HepG2 (cell line): ENCODE measurements at regions of chr2 and their contacts with region 1.

Region 1: DNA sequence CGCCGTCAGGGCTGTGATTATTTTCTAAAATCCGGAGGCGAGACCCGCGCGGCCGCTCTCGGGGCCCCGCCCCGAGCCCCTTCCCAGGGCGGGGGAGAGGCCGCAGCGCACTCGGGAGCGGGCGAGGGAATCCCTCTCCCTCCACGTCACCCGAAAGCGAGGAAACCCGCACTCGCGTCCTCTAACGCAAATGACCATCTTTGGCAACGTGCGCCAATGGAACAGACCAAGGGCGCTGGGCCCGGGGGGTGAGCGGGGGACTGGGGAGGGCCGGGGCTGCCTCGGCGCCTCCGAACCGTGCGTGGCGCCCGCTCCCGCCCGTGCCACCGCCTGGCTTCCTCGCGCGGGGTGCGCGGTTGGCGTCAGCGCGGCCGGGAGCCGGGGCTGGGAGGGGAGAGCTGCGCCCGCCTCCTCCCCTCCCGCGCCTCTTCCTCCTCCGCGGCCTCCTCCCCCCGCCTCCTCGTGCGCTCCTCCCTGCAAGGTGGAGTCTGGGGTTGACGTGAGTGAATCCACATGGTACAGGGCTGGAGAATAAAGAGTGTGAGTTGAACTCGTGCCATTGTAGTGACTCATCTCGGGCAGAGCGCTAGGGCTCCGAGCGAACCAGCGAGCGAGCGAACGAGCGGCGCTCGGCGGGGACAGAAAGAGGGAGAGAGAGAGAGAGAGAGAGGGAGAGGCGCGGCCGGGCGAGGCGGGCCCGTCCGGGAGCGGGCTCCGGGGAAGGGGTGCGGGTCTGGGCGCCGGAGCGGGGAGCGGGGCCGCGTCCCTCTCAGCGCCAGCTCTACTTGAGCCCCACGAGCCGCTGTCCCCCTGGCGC is at the start of gene FOSL2:
- DNase-seq: peak; percentile 100
- ATAC-seq: peak; percentile 85
- H3K4me3 ChIP-seq: peak within 1 kb of the TSS; percentile 91 to 95 (median 93)
- H3K27ac ChIP-seq: peak within 1 kb of the TSS; percentile 88
- H3K4me1 ChIP-seq: peaks cover 45% of the 10 kb centered on the region
- H3K27me3 ChIP-seq: peaks cover 1 to 20% of the 10 kb centered on the region in 2 experiments; a peak in 3 of 5 replicates
- CTCF ChIP-seq: peak; percentile 36
- EP300 ChIP-seq: peak; percentile 46 to 55; a peak in 2 of 4 replicates
- POLR2A ChIP-seq: peak in 1 of 2 experiments; percentile 88; a peak in 2 of 4 replicates
- RAD21 ChIP-seq: peak; percentile 53
- total RNA-seq, gene FOSL2: 2.3 and 3.4 TPM in 2 replicates

Region 2: DNA sequence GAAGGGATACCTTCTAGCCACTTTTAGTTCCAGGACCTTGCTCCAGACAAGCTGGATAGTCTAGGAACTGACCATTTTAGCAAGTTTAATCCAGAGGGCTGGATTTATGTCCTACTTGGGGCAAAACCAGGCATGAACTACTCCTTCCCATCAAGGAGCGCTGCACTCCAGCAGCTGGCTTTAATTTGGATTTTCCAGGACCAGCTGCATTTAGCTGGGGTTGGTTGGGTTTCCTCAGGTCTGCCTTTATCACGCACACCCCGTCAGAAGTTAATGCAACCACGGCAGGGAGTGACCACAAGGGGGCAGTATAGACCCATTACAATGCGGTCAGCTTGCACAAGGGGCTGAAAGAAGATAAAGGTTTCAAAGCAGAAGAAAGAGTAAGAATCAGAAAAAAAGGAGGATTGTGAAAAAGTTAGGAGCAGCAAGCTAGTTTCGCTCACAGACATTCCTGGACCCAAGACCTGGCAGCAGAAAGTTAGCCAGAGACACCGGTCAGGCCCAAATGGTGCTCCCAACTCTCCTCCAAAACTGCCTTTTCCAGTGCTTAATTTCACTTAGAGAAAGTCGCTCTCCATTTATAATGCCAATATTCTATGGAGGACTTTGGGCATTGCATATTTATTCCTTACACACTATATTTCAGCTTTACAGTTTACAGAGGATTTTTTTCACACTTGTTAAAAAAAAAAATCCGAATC is 688.7 kb before region 1 on chr2:
- CTCF ChIA-PET with region 1: interaction called, 11 read pairs
- POLR2A ChIA-PET with region 1: interaction called, 3 read pairs
- in situ Hi-C with region 1: loop called (anchors 10 kb)
- intact Hi-C with region 1: loop called (anchors 2 kb)
- DNase-seq: peak; percentile 80
- ATAC-seq: peak; percentile 85
- H3K4me3 ChIP-seq: no peak overlapping the region
- H3K27ac ChIP-seq: no peak overlapping the region
- H3K4me1 ChIP-seq: peaks cover 55% of the 10 kb centered on the region
- H3K27me3 ChIP-seq: no peaks in the 10 kb centered on the region
- CTCF ChIP-seq: peak; percentile 96
- EP300 ChIP-seq: no peak
- POLR2A ChIP-seq: no peak
- RAD21 ChIP-seq: peak; percentile 87

Region 3: GRCh38 chr2:27807476-27807875 is 585.0 kb before region 1 on chr2:
- CTCF ChIA-PET with region 1: interaction called, 5 read pairs
- POLR2A ChIA-PET with region 1: no interaction called
- in situ Hi-C with region 1: no loop called
- intact Hi-C with region 1: loop called (anchors 1 kb)
- DNase-seq: peak; percentile 36
- ATAC-seq: peak; percentile 95
- H3K4me3 ChIP-seq: no peak overlapping the region
- H3K27ac ChIP-seq: no peak overlapping the region
- H3K4me1 ChIP-seq: peaks cover 15% of the 10 kb centered on the region
- H3K27me3 ChIP-seq: no peaks in the 10 kb centered on the region
- CTCF ChIP-seq: peak; percentile 73
- EP300 ChIP-seq: no peak
- POLR2A ChIP-seq: no peak
- RAD21 ChIP-seq: peak; percentile 78

Region 4: GRCh38 chr2:28175028-28175427 is 217.5 kb before region 1 on chr2:
- CTCF ChIA-PET with region 1: no interaction called
- POLR2A ChIA-PET with region 1: no interaction called
- in situ Hi-C with region 1: no loop called
- intact Hi-C with region 1: loop called (anchors 10 kb)
- DNase-seq: peak; percentile 48
- ATAC-seq: peak; percentile 97
- H3K4me3 ChIP-seq: no peak overlapping the region
- H3K27ac ChIP-seq: no peak overlapping the region
- H3K4me1 ChIP-seq: peaks cover 28% of the 10 kb centered on the region
- H3K27me3 ChIP-seq: no peaks in the 10 kb centered on the region
- CTCF ChIP-seq: peak; percentile 48
- EP300 ChIP-seq: no peak
- POLR2A ChIP-seq: no peak
- RAD21 ChIP-seq: peak; percentile 53

Region 5: GRCh38 chr2:28377984-28378678 is 14.4 kb before region 1 on chr2:
- CTCF ChIA-PET with region 1: no interaction called
- POLR2A ChIA-PET with region 1: interaction called, 11 read pairs
- in situ Hi-C with region 1: no loop called
- intact Hi-C with region 1: no loop called
- DNase-seq: no peak
- ATAC-seq: peak; percentile 21
- H3K4me3 ChIP-seq: peak overlapping the region in 1 of 3 experiments; percentile 43; a peak in 2 of 6 replicates
- H3K27ac ChIP-seq: no peak overlapping the region
- H3K4me1 ChIP-seq: peaks cover 39% of the 10 kb centered on the region
- H3K27me3 ChIP-seq: peaks cover 5 to 70% of the 10 kb centered on the region in 2 experiments; a peak in 4 of 5 replicates
- CTCF ChIP-seq: no peak
- EP300 ChIP-seq: no peak
- POLR2A ChIP-seq: no peak
- RAD21 ChIP-seq: no peak

Region 6: GRCh38 chr2:28527196-28527595 is 134.7 kb after region 1 on chr2:
- CTCF ChIA-PET with region 1: no interaction called
- POLR2A ChIA-PET with region 1: no interaction called
- in situ Hi-C with region 1: no loop called
- intact Hi-C with region 1: no loop called
- DNase-seq: no peak
- ATAC-seq: peak; percentile 73
- H3K4me3 ChIP-seq: no peak overlapping the region
- H3K27ac ChIP-seq: no peak overlapping the region
- H3K4me1 ChIP-seq: no peaks in the 10 kb centered on the region
- H3K27me3 ChIP-seq: peaks cover 6 to 53% of the 10 kb centered on the region in 2 experiments; a peak in 4 of 5 replicates
- CTCF ChIP-seq: 0 out of 2 replicates have a peak, but pooled peaks have one; percentile 10
- EP300 ChIP-seq: no peak
- POLR2A ChIP-seq: no peak
- RAD21 ChIP-seq: no peak